ENCODE measurements at regions of chr7 and their contacts with region 1.

Region 1: DNA sequence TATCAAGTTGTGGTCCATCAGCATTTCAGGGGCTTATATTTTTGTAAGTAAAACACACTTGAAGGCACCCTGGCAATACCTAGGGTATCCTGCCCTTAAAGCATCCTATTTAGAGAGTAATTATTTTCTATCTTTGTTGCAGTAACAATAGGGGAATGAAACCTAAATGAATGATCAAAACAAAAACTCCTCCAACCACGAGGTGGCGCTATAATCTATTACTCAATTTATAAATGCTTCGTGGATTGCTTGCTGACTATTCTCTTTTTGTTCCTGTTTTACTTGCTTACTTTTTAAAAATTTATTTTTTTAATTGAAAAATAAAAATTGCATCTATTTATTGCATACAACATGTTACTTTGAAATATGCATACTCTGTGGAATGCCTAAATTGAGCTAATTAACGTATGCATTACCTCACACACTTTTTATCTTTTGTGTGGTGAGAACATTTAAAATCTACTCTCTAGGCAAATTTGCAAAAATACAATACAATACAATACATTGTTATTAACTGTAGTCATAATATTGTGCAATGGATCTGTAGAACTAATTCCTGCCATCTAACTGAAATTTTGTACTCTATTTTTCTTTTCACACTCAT is 147.7 kb upstream of the BMPER start:
- DNase-seq: no peak
- H3K4me3 ChIP-seq: no peak overlapping the region
- H3K27ac ChIP-seq: no peak overlapping the region
- H3K4me1 ChIP-seq: peaks cover 0 to 8% (median 7%) of the 10 kb centered on the region in 4 donors
- H3K27me3 ChIP-seq: no peaks in the 10 kb centered on the region
- CTCF ChIP-seq: peak in 3 of 4 experiments; percentile 41 to 76 (median 69)
- EP300 ChIP-seq: no peak
- POLR2A ChIP-seq: no peak

Region 2: DNA sequence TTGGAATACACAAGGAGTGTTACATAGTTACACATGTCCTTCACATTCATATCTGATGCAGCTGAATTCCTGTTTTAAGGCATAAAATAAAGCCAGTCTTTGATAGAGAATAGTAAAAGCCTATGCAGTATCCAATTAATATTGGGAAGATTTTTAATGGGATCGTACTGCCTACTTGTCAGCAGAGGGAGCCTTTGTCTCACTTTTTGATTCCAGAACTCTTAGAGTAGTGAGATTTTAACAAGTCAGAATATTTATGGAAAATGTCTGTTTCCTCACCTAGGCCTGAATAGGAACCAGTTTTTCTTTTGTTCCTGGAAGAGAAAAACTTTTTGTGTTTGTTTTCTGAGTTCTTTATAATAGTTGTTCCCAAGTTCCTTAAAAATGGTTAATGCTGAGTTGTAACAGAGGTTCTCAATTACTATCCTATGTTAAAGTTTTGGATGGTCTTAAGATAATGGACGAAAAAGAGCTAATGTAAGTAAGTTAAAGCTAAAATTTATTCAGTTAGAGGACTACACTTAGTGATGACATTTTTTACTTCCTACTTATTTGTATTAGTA is 514.3 kb before region 1 on chr7:
- intact Hi-C with region 1: loop called (anchors 10 kb)
- DNase-seq: no peak
- H3K4me3 ChIP-seq: no peak overlapping the region
- H3K27ac ChIP-seq: no peak overlapping the region
- H3K4me1 ChIP-seq: peaks cover 0 to 10% (median 6%) of the 10 kb centered on the region in 4 donors
- H3K27me3 ChIP-seq: no peaks in the 10 kb centered on the region
- CTCF ChIP-seq: peak; percentile 39 to 75 (median 62)
- EP300 ChIP-seq: no peak
- POLR2A ChIP-seq: no peak

Region 3: DNA sequence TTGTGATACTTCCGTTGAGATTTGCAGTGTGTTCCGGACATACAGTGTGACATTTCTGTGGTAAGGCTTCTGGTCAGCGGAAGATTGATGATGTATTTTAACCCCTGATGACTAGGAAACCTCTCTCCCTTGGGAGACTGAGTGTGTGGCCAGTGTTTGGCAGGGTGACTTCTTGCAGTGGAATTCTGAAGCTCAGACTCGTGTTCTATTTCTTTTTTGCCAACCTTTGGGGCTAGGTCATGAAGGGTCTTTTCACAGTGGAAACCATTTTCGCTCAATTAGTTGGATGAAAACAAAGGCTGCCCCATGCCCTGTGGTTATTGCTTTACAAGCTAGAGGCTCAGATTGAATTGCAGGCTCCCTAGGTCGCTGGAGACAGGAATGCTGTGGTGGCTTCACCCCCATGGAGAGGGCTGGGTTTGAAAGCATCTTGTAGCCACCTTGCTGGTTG is 339.4 kb before region 1 on chr7:
- intact Hi-C with region 1: no loop called
- DNase-seq: no peak
- H3K4me3 ChIP-seq: no peak overlapping the region
- H3K27ac ChIP-seq: no peak overlapping the region
- H3K4me1 ChIP-seq: peaks cover 0 to 23% (median 1%) of the 10 kb centered on the region in 4 donors
- H3K27me3 ChIP-seq: no peaks in the 10 kb centered on the region
- CTCF ChIP-seq: no peak
- EP300 ChIP-seq: no peak
- POLR2A ChIP-seq: no peak

Measured in sigmoid colon (tissue), 7 donors.